ENCODE measurements at regions of chr10 and their contacts with region 1.

Region 1: DNA sequence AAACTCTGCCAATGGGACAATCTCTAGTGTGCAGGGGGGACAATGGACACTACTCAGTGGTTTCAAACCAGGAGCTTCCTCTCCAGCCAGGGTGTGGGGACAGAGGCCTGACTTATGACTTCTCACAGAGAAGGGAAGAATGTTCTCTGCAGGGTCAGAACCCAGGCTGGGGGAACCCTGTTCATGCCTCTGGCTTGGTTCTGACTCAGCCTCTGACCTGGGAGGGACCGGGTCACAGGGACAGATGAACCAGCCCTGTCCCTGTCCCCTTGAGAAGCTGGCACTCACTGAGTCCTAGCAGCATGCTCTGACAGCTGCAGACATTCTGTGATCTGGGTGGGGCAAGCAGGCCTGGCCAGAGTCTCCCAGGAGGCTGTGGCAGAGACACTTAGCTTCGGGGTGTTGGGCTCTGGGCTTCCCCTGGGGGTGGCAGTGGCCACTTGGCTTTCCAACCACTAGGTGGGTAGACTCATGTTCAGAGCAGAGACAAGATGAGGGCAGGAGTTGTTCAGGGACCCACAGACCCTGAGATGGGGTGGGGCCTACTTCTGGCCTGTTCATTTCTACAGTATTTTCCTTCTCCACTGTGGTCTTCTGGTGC is 13.6 kb downstream of the TSPAN15 start:
- DNase-seq: no peak
- ATAC-seq: peak; percentile 25
- H3K4me3 ChIP-seq: no peak overlapping the region
- H3K27ac ChIP-seq: no peak overlapping the region
- H3K4me1 ChIP-seq: peaks cover 49% of the 10 kb centered on the region
- H3K27me3 ChIP-seq: no peaks in the 10 kb centered on the region
- CTCF ChIP-seq: no peak

Region 2: GRCh38 chr10:68423522-68423921 is 1041.4 kb before region 1 on chr10:
- CTCF ChIA-PET with region 1: no interaction called
- POLR2A ChIA-PET with region 1: interaction called, 14 read pairs
- intact Hi-C with region 1: no loop called
- DNase-seq: no peak
- ATAC-seq: no peak
- H3K4me3 ChIP-seq: no peak overlapping the region
- H3K27ac ChIP-seq: no peak overlapping the region
- H3K4me1 ChIP-seq: no peaks in the 10 kb centered on the region
- H3K27me3 ChIP-seq: no peaks in the 10 kb centered on the region
- CTCF ChIP-seq: no peak

Region 3: GRCh38 chr10:69278446-69278963 is 186.4 kb before region 1 on chr10 and contains the start of gene HK1:
- CTCF ChIA-PET with region 1: no interaction called
- POLR2A ChIA-PET with region 1: no interaction called
- intact Hi-C with region 1: no loop called
- DNase-seq: no peak
- ATAC-seq: no peak
- H3K4me3 ChIP-seq: no peak within 1 kb of the TSS
- H3K27ac ChIP-seq: no peak within 1 kb of the TSS
- H3K4me1 ChIP-seq: no peaks in the 10 kb centered on the region
- H3K27me3 ChIP-seq: no peaks in the 10 kb centered on the region
- CTCF ChIP-seq: no peak
- total RNA-seq, gene HK1: 189 and 208 TPM in 2 replicates

Region 4: DNA sequence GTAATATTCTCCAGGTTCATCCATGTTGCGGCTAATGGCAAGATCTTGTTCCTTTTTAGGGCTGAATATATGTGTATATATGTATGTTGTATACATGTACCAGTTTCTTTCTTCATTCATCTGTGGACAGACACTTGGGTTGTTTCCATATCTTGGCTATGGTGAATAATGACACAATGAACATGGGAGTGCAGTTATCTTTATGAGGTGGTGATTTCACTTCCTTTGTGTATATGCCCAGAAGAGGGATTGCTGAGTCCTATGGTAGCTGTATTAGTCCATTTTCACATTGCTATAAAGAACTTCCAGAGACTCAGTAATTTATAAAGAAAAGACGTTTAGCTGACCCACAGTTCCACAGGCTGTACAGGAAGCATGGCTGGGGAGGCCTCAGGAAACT is 30.7 kb before region 1 on chr10:
- CTCF ChIA-PET with region 1: interaction called, 3 read pairs
- POLR2A ChIA-PET with region 1: no interaction called
- intact Hi-C with region 1: loop called (anchors 5 kb)
- DNase-seq: peak; percentile 73
- ATAC-seq: peak; percentile 57
- H3K4me3 ChIP-seq: no peak overlapping the region
- H3K27ac ChIP-seq: peak overlapping the region; percentile 56
- H3K4me1 ChIP-seq: peaks cover 33% of the 10 kb centered on the region
- H3K27me3 ChIP-seq: no peaks in the 10 kb centered on the region
- CTCF ChIP-seq: no peak